GM12878 (cell line): ENCODE measurements at regions of chr16 and their contacts with region 1.

Region 1: DNA sequence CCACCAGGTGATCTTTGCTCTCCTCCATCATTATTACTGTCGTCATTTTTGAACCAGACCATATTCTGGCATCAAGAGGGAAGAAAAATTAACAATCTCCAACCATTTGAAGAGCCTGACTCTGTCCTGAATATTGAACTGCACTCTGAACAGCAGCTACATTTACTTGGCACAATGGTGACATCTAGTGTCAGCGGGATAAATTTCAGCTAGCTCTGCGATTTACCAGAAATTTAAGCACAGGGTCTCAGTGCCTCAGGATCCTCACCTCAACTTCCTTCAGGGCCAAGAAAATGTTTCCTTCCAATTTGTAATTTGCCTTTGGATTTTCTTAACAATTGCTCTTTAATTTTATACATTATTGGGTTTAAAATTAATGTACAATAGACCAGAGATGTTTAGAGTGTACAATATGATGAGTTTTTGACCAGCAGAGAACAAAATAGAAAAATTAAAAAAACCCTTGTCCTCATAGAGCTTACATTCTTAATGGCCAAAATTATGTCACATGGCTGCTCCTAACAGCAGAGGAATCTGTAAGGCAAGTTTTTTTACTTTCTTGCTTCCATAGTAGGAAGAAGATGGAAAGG is 10.7 kb upstream of the ZNF19 start:
- DNase-seq: peak; percentile 28
- ATAC-seq: peak; percentile 88
- H3K4me3 ChIP-seq: no peak overlapping the region
- H3K27ac ChIP-seq: no peak overlapping the region
- H3K4me1 ChIP-seq: no peaks in the 10 kb centered on the region
- H3K27me3 ChIP-seq: no peaks in the 10 kb centered on the region
- CTCF ChIP-seq: peak; percentile 65 to 87 (median 79)
- EP300 ChIP-seq: no peak
- POLR2A ChIP-seq: no peak
- RAD21 ChIP-seq: peak; percentile 89

Region 2: DNA sequence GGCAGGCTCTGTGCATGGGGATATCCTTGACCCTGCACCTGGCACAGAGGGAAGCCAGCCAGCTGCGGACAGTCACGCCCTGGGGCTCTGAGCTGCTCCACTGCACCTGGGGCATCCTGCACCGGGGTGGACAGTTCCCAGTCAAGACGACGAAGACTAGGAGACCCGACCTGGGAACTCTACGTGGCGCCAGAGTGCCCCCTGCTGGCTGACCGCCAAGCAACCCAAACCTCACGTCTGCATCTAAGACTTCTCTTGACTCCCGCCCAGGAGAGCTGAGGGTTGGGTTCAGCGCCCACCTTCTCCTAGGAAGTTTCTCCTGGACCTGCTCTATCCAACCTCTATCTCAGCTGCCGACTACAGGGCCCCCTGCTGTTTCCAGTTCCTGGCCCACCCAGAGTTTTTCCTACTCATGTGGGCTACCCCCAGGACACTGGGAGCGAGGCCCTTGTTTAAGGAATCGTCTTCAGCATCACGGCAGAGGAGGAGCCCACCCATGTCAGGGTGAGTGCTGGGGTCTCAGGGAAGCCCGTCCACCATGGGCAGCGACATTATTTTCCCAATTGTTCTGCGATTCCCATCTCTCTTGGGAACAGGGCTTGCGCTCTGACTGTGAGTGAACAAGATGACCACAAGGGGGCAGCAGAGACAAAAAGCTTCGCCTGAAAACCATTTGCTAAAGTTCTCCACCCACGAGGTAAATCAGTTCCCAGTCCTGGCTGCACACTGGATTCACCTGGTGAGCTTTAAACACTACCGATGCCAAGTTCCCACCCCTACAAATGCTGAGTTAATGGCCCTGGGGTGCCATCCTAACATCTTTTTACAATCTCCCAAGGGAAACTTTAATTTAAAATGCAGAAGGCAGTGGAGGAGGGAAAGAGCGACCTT is 87.4 kb before region 1 on chr16:
- CTCF ChIA-PET with region 1: interaction called, 164 read pairs
- POLR2A ChIA-PET with region 1: interaction called, 5 read pairs
- RAD21 ChIA-PET with region 1: interaction called, 69 read pairs
- SMC1A ChIA-PET with region 1: interaction called, 75 read pairs
- in situ Hi-C with region 1: loop called (anchors 5 kb)
- intact Hi-C with region 1: loop called (anchors 1 kb)
- DNase-seq: no peak
- ATAC-seq: peak; percentile 92
- H3K4me3 ChIP-seq: no peak overlapping the region
- H3K27ac ChIP-seq: no peak overlapping the region
- H3K4me1 ChIP-seq: no peaks in the 10 kb centered on the region
- H3K27me3 ChIP-seq: peaks cover 0 to 7% of the 10 kb centered on the region in 2 experiments; a peak in 1 of 4 replicates
- CTCF ChIP-seq: peak; percentile 66 to 83 (median 82)
- EP300 ChIP-seq: no peak
- POLR2A ChIP-seq: no peak
- RAD21 ChIP-seq: peak; percentile 76

Region 3: DNA sequence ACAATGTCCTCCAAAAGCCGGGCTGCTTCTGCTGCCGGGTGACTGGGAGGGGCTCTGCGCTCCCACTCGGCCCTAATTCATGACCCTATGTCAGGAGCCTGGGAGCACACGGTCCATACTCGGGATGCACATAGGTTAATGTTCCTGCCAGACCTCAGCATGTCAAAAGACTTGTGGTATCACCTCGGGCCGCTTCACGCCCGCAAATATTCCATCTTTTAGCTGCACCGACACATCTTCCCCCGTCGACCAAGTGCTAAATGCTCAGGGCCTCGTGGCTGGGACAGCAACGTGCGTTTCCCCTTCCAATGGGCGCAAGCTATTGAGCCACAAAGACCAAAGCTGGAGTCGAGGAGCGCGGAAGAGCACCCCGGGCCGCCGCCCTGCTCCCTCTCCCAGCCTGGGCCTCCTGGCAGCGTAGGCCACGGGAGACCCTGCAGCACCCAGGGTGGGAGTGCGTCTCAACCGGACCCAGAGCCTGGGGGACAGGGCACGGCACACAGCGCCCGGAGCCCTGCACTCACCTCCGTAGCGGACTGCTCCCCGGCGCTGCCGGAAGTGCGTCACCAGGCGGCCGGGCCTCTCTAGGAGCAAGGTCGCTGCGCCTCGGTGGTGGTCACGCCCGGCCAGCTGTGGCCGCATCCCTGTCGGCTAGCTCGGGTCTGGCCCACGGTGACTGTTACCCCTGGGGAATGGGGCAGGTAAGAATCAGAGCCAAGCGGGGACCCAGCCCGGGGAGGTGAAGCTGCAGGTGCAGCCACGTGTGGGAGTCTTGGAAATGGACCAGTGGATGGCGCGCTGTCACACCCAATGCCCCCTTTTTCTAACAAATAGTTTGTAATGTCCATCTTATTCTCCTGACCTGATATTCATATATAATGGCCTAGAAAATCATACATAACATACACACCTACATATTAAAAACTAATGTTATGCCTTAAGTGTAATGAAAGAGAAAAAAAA is 37.9 kb before region 1 on chr16 and contains the start of gene ZNF23:
- CTCF ChIA-PET with region 1: interaction called, 10 read pairs
- POLR2A ChIA-PET with region 1: no interaction called
- RAD21 ChIA-PET with region 1: interaction called, 5 read pairs
- SMC1A ChIA-PET with region 1: interaction called, 5 read pairs
- in situ Hi-C with region 1: no loop called
- intact Hi-C with region 1: no loop called
- DNase-seq: peak; percentile 39
- ATAC-seq: peak; percentile 98
- H3K4me3 ChIP-seq: peak within 1 kb of the TSS; percentile 90
- H3K27ac ChIP-seq: peak within 1 kb of the TSS; percentile 74
- H3K4me1 ChIP-seq: no peaks in the 10 kb centered on the region
- H3K27me3 ChIP-seq: no peaks in the 10 kb centered on the region
- CTCF ChIP-seq: peak; percentile 9 to 23 (median 22); a peak in 3 of 6 replicates
- EP300 ChIP-seq: no peak
- POLR2A ChIP-seq: peak; percentile 99
- RAD21 ChIP-seq: no peak
- polyA plus RNA-seq, gene ZNF23: 3.6 to 4.8 TPM

Region 4: DNA sequence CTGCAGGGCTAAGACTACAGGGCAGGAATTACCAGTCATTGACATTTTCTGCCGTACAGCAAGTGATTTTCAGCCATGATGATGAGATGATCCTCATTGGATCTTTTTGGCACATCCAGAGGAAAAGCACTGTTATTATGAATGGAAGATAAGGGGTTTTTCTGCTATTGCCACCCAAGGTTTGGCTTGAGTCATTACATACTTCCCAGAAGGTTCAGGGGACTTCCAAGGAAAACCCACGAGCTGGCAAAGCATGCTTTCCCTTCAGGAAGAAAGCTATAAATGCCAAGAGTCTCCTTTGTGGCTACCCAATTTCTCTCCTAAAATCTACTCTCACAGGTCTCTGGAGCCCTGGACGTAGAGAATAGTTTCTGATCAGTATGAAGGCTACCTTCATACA is 32.5 kb after region 1 on chr16:
- CTCF ChIA-PET with region 1: interaction called, 134 read pairs
- POLR2A ChIA-PET with region 1: no interaction called
- RAD21 ChIA-PET with region 1: interaction called, 11 read pairs
- SMC1A ChIA-PET with region 1: interaction called, 37 read pairs
- in situ Hi-C with region 1: no loop called
- intact Hi-C with region 1: loop called (anchors 2 kb)
- DNase-seq: no peak
- ATAC-seq: no peak
- H3K4me3 ChIP-seq: no peak overlapping the region
- H3K27ac ChIP-seq: no peak overlapping the region
- H3K4me1 ChIP-seq: no peaks in the 10 kb centered on the region
- H3K27me3 ChIP-seq: no peaks in the 10 kb centered on the region
- CTCF ChIP-seq: no peak
- EP300 ChIP-seq: no peak
- POLR2A ChIP-seq: no peak
- RAD21 ChIP-seq: no peak

Region 5: GRCh38 chr16:71564155-71564967 is 64.5 kb after region 1 on chr16:
- CTCF ChIA-PET with region 1: interaction called, 13 read pairs
- POLR2A ChIA-PET with region 1: no interaction called
- RAD21 ChIA-PET with region 1: no interaction called
- SMC1A ChIA-PET with region 1: interaction called, 5 read pairs
- in situ Hi-C with region 1: no loop called
- intact Hi-C with region 1: no loop called
- DNase-seq: no peak
- ATAC-seq: peak; percentile 1; the same call in 2 of the 3 replicates
- H3K4me3 ChIP-seq: peak overlapping the region; percentile 76
- H3K27ac ChIP-seq: peak overlapping the region; percentile 91
- H3K4me1 ChIP-seq: peaks cover 3% of the 10 kb centered on the region; the same call in 1 of the 2 replicates
- H3K27me3 ChIP-seq: no peaks in the 10 kb centered on the region
- CTCF ChIP-seq: no peak
- EP300 ChIP-seq: no peak
- POLR2A ChIP-seq: no peak
- RAD21 ChIP-seq: no peak